HEK293 (cell line): ENCODE measurements at regions of chr12 and their contacts with region 1.

Region 1: GRCh38 chr12:2034633-2035430 is 18.0 kb upstream of the CACNA1C start:
- H3K4me3 ChIP-seq: no peak overlapping the region; the same call in 1 of the 2 replicates
- H3K27ac ChIP-seq: no peak overlapping the region
- H3K4me1 ChIP-seq: 0 out of 2 replicates have a peak, but pooled peaks cover 4% of the 10 kb centered on the region
- CTCF ChIP-seq: peak; percentile 86

Region 2: GRCh38 chr12:1197264-1198018 is 837.4 kb before region 1 on chr12:
- CTCF ChIA-PET with region 1: no interaction called
- POLR2A ChIA-PET with region 1: no interaction called
- H3K4me3 ChIP-seq: no peak overlapping the region
- H3K27ac ChIP-seq: no peak overlapping the region
- H3K4me1 ChIP-seq: no peaks in the 10 kb centered on the region
- CTCF ChIP-seq: no peak

Region 3: DNA sequence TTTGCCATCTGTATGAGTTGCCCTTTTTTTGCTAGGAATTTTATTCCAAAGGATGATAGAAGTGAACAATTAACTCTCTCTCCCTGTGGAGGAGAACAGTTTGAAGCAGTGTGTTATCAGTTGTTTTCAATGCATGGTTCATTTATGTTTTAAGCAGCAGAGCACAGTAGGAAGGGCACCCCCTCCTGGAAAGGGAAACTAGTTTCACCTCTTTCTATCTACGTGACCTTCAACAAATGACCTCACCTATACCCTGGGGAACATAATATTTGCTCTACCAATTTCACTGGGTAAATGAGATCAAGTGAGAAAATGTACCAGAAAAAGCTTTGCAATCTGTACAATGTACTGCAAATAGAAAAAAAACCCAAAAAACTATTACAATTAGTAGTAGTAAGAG is 25.2 kb before region 1 on chr12:
- CTCF ChIA-PET with region 1: interaction called, 12 read pairs
- POLR2A ChIA-PET with region 1: no interaction called
- H3K4me3 ChIP-seq: no peak overlapping the region
- H3K27ac ChIP-seq: no peak overlapping the region
- H3K4me1 ChIP-seq: peaks cover 2% of the 10 kb centered on the region; the same call in 1 of the 2 replicates
- CTCF ChIP-seq: no peak

Region 4: DNA sequence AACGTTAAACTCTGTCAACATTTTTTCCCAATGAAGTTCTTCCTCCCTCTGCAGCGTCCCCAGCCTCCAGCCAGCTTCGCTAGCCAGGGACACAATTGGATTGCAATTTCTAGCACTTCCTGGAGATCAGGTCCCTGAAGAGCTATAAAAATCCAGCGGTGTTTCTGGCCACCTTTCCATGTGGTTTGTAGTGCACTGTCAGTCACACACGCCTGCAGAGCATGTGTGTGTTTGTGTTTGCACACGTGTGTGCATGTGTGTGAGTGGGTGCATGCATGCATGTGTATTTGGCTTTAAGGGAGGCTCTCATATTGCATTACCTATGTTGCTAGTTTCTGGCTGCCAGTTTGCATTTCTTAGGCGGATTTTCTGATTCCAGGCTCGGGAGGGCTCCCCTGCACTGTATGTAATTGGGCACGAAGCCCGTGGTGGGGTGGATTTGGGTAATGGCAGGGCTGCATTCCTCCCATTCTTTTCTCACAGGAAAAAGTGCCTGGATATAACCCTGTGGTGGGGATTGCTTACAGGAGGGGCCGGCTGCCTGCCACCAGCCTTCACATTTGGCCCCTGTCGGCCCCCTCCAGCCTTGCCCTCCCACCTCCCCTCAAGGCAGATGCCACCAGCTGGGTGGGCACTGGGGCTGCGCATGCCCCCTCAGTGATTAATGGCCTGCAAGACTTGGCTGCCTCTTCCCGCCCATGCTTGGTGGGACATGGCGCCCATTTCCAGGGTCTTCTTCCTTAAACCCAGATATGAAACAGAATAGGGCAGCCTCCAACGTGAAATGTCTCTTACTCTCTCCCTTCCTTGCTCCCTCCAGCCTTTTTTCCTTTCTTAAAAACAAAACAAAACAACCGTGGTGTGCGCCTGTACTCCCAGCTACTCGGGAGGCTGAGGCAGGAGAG is 1116.4 kb after region 1 on chr12:
- CTCF ChIA-PET with region 1: no interaction called
- POLR2A ChIA-PET with region 1: no interaction called
- H3K4me3 ChIP-seq: no peak overlapping the region
- H3K27ac ChIP-seq: no peak overlapping the region
- H3K4me1 ChIP-seq: 0 out of 2 replicates have a peak, but pooled peaks cover 5% of the 10 kb centered on the region
- CTCF ChIP-seq: no peak